Common myeloid progenitor, CD34-positive (primary cell): ENCODE measurements at regions of chr11 and their contacts with region 1.

Region 1: GRCh38 chr11:65625628-65626342 is 10.2 kb downstream of the PCNX3 start:
- DNase-seq: peak in 2 of 3 donors; percentile 73 to 81
- H3K4me3 ChIP-seq: no peak overlapping the region
- H3K27ac ChIP-seq: no peak overlapping the region
- H3K4me1 ChIP-seq: peaks cover 0 to 5% (median 2%) of the 10 kb centered on the region in 4 experiments
- H3K27me3 ChIP-seq: no peaks in the 10 kb centered on the region

Region 2: GRCh38 chr11:65615229-65615941 is 10.4 kb before region 1 on chr11 and contains the start of gene PCNX3:
- CTCF ChIA-PET with region 1: interaction called, 14 read pairs
- POLR2A ChIA-PET with region 1: interaction called, 4 read pairs
- DNase-seq: peak; percentile 100
- H3K4me3 ChIP-seq: peak within 1 kb of the TSS; percentile 73 to 98 (median 86)
- H3K27ac ChIP-seq: peak within 1 kb of the TSS; percentile 82 to 93
- H3K4me1 ChIP-seq: peaks cover 4 to 50% (median 46%) of the 10 kb centered on the region in 4 experiments
- H3K27me3 ChIP-seq: no peaks in the 10 kb centered on the region

Region 3: DNA sequence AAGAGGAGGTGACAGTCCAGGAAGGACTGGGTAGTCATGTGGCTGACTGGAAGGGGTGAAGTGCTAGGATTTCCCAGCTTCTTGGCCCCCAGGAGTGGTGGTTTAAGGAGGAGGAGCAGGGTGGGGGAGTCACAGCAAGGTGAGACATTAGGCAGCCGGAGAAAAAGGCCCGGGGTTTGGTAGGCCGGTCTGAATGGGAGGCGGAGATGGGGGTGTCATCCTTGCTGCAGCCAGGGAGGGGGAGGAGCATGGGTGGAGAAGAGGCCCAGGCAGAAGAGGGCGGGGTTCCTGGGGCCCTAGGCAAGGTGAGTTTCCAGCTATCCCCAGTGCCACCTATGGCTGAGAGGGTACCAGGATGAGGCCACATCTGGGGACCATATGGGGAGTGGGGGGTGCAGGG is 18.2 kb after region 1 on chr11:
- CTCF ChIA-PET with region 1: interaction called, 56 read pairs
- POLR2A ChIA-PET with region 1: interaction called, 7 read pairs
- DNase-seq: no peak
- H3K4me3 ChIP-seq: no peak overlapping the region
- H3K27ac ChIP-seq: no peak overlapping the region
- H3K4me1 ChIP-seq: peaks cover 5 to 48% (median 43%) of the 10 kb centered on the region in 4 experiments
- H3K27me3 ChIP-seq: no peaks in the 10 kb centered on the region

Region 4: DNA sequence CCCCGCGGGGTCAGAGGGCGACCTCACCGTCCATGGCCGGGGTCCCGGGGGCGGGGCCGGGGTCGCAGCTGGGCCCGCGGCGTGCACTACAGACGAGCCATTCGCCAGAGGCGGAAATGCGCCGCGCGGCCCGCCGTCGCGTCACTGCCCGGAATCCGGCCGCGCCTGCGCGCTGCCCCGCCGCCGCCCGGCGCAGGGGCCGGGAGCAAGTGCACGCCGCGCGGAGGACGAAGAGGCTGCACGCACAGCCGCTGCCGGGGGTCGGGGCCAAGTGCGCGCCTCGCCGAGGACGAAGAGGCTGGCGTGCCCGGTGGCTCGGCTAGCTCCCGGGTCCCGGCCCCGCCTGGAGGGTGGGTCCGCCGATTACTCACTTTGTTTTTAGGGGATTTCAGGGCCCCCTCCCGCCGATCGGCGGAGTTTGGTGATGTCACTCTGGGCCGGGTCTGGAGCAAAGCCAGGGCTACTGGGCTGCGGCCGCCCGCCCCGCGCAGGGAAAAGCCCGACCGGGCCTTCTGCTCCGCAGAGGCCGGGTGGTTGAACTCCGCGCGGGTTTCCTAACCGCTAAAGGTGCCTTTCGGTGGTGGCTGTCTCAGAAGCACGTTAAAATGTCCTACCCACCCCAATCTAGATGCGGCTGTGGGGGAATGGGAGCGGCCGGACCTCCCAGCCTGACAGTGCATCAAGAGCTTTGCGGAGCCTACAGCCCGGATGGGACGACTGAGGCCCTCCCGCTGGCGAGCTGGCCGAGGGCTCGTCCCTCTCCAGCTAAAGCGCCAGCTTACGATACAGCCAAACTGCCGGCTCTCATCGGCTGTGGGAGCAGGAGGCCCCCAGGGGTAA is 37.2 kb after region 1 on chr11 and contains the start of gene RELA:
- CTCF ChIA-PET with region 1: interaction called, 27 read pairs
- POLR2A ChIA-PET with region 1: no interaction called
- DNase-seq: peak; percentile 93 to 98 (median 97)
- H3K4me3 ChIP-seq: peak within 1 kb of the TSS; percentile 74 to 99 (median 95)
- H3K27ac ChIP-seq: peak within 1 kb of the TSS; percentile 95 to 98
- H3K4me1 ChIP-seq: peaks cover 2 to 26% (median 21%) of the 10 kb centered on the region in 4 experiments
- H3K27me3 ChIP-seq: no peaks in the 10 kb centered on the region

Region 5: DNA sequence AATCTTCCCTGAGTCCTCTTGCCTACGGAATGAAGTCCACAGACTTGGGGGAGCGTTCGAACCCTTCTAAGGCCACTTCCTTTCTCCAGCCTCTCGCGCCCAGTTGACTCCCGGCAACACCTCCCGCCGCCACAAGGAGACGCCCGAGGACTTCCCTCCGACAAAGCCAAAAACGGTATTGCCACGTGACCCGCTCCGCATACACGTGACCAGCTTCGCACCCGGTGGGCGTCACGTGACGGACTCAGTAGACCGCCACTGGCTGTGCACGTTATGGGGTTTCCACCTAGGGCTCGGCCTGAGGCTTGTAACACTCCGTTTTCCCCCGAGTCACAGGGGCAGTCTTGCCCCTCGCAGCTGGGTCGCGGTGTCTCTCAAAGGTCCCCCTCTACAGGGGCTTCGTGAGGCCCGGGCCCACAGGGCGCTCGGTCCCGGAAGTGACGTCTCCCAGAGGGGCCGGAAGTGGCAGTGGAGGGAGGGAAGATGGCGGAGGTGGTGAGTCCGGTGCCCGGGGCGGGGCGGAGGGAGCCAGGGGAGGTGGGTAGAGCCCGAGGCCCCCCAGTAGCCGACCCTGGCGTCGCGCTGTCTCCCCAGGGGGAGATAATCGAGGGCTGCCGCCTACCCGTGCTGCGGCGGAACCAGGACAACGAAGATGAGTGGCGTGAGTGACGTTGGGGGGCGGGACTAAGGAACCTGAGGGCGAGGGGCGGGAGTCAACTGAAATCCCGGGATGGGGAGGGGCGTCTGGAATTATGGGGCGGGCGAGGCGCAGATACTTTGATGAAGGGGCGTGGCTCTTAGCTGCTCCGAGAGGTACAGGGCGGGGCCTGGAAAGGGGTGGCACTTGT is 86.2 kb after region 1 on chr11 and contains the start of gene KAT5:
- CTCF ChIA-PET with region 1: interaction called, 36 read pairs
- POLR2A ChIA-PET with region 1: no interaction called
- DNase-seq: peak; percentile 98 to 99 (median 99)
- H3K4me3 ChIP-seq: peak within 1 kb of the TSS; percentile 46 to 88 (median 76)
- H3K27ac ChIP-seq: peak within 1 kb of the TSS; percentile 98 to 99
- H3K4me1 ChIP-seq: peaks cover 2 to 22% (median 13%) of the 10 kb centered on the region in 4 experiments
- H3K27me3 ChIP-seq: no peaks in the 10 kb centered on the region

Region 6: GRCh38 chr11:65817835-65818742 is 192.3 kb after region 1 on chr11:
- CTCF ChIA-PET with region 1: interaction called, 12 read pairs
- POLR2A ChIA-PET with region 1: no interaction called
- DNase-seq: peak; percentile 87 to 93 (median 92)
- H3K4me3 ChIP-seq: peak overlapping the region; percentile 50 to 89 (median 75)
- H3K27ac ChIP-seq: peak overlapping the region in 1 of 2 experiments; percentile 62
- H3K4me1 ChIP-seq: peaks cover 3 to 17% (median 15%) of the 10 kb centered on the region in 4 experiments
- H3K27me3 ChIP-seq: no peaks in the 10 kb centered on the region